ENCODE measurements at regions of chr6 and their contacts with region 1.

Region 1: DNA sequence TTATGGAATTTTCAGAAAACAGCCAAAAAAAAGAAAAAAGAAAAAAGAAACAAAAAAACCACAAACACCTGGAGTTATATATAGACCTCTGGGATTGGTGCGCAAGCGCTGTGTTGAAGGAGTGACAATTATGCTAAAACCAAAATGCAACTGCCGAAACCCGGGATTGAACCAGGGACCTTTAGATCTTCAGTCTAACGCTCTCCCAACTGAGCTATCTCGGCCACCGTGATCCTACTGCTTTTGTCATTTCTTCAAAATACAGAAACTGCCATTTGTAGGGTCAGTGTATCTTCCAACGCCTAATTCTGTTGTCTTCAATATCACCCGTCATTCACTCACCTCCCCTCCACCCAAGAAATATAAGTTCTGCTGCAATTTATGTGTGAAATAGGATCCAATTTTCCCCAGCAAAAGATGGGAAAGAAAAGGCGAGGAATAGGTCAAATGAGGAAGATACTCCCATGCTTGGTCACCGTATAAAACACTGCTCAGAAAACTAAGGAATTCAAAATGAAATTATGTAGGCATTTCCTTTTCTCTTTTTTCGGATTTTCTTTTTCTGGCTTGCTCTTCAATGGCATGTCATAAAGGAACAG is 116.0 kb downstream of the TRIM27 start:
- DNase-seq: no peak
- ATAC-seq: no peak
- H3K4me3 Mint-ChIP-seq: no peak overlapping the region
- H3K27ac Mint-ChIP-seq: no peak overlapping the region
- H3K4me1 Mint-ChIP-seq: peaks cover 3% of the 10 kb centered on the region
- H3K27me3 Mint-ChIP-seq: peaks cover 72% of the 10 kb centered on the region
- CTCF ChIP-seq: no peak

Region 2: DNA sequence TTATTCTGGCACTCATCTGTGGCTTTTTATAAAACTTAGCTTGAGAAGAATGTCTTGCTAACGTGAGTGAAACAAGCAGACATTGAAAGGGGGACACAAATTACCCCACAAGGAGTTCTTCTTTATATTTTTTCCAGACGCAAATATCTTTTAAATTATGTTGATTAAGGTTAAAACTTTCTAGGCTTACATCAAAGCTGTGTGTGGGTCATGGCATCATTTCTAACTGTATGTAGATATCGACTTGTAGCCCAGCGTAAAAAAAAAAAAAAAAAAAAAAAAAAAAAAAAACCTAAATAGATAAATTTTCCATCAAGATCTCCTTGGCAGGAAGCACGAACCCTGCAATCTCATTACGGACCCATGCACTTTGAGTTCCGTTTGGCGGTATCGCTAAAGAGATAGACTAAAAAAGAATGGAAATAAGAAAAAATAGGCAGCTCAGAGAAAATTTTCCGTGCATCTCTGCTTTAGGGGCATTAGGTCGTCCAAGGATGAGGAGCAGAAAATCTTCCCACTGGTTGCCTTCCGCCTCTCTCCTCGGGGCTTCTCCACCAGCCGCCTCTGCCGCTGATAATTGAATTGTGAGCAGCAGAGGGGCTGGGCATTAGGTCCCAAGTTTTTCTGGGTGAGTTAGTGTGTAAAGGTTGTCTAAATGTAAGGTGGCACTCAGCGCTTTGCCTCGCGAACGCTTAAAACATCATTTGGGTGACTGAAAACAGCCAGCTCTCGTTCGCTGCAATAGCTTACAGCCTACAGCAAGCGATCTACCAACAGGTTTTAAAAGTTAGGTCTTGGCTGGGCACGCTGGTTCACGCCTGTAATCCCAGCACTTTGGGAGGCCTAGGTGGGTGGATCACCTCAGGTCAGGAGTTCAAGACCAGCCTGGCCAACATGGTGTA is 78.0 kb before region 1 on chr6:
- CTCF ChIA-PET with region 1: no interaction called
- POLR2A ChIA-PET with region 1: no interaction called
- intact Hi-C with region 1: loop called (anchors 10 kb)
- DNase-seq: no peak
- ATAC-seq: no peak
- H3K4me3 Mint-ChIP-seq: peak overlapping the region; percentile 78
- H3K27ac Mint-ChIP-seq: no peak overlapping the region
- H3K4me1 Mint-ChIP-seq: peaks cover 15% of the 10 kb centered on the region
- H3K27me3 Mint-ChIP-seq: peaks cover 75% of the 10 kb centered on the region
- CTCF ChIP-seq: no peak

Region 3: GRCh38 chr6:28776269-28777146 is 31.3 kb before region 1 on chr6:
- CTCF ChIA-PET with region 1: no interaction called
- POLR2A ChIA-PET with region 1: no interaction called
- intact Hi-C with region 1: loop called (anchors 5 kb)
- DNase-seq: no peak
- ATAC-seq: no peak
- H3K4me3 Mint-ChIP-seq: no peak overlapping the region
- H3K27ac Mint-ChIP-seq: no peak overlapping the region
- H3K4me1 Mint-ChIP-seq: peaks cover 8% of the 10 kb centered on the region
- H3K27me3 Mint-ChIP-seq: peaks cover 91% of the 10 kb centered on the region
- CTCF ChIP-seq: no peak

Region 4: GRCh38 chr6:28789553-28790083 is 18.2 kb before region 1 on chr6:
- CTCF ChIA-PET with region 1: no interaction called
- POLR2A ChIA-PET with region 1: no interaction called
- intact Hi-C with region 1: no loop called
- DNase-seq: no peak
- ATAC-seq: no peak
- H3K4me3 Mint-ChIP-seq: peak overlapping the region; percentile 7
- H3K27ac Mint-ChIP-seq: no peak overlapping the region
- H3K4me1 Mint-ChIP-seq: peaks cover 7% of the 10 kb centered on the region
- H3K27me3 Mint-ChIP-seq: peaks cover 77% of the 10 kb centered on the region
- CTCF ChIP-seq: no peak

Region 5: GRCh38 chr6:28953039-28953584 is 145.3 kb after region 1 on chr6:
- CTCF ChIA-PET with region 1: no interaction called
- POLR2A ChIA-PET with region 1: no interaction called
- intact Hi-C with region 1: no loop called
- DNase-seq: no peak
- ATAC-seq: peak; percentile 77
- H3K4me3 Mint-ChIP-seq: peak overlapping the region; percentile 65
- H3K27ac Mint-ChIP-seq: no peak overlapping the region
- H3K4me1 Mint-ChIP-seq: peaks cover 16% of the 10 kb centered on the region
- H3K27me3 Mint-ChIP-seq: peaks cover 20% of the 10 kb centered on the region
- CTCF ChIP-seq: no peak